ENCODE measurements at regions of chr7 and their contacts with region 1.

Region 1: DNA sequence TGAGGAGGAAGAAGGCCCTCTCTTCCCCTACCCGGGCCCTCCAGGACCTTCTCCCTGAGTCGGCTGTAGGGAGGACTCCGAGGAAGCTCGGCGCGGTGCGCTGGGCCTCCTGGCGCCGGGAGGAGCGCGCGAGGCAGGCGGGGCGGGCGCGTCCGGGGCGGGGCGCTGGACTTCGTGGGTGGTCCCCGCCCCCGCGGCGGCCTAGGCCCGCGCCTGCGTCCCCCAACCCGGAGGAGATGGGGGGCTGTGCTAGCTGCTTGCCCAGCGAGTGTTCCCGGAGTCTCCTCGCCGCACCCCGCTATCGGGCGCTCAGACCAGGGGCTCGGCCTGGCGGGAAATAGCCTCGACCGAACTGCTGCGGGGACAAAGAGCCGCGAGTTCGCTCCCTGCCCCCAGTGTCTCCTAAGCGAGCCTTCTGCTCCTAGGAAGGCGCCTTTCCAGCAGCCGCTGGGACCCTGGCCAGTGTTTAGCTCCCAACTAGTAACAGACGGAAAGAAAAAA is 19.2 kb upstream of the SMO start:
- DNase-seq: peak in 2 of 3 donors; percentile 46 to 65
- H3K4me3 ChIP-seq: peak overlapping the region; percentile 50 to 85 (median 73)
- H3K27ac ChIP-seq: peak overlapping the region in 1 of 2 experiments; percentile 73
- H3K4me1 ChIP-seq: peaks cover 3 to 18% (median 14%) of the 10 kb centered on the region in 4 experiments
- H3K27me3 ChIP-seq: no peaks in the 10 kb centered on the region

Region 2: DNA sequence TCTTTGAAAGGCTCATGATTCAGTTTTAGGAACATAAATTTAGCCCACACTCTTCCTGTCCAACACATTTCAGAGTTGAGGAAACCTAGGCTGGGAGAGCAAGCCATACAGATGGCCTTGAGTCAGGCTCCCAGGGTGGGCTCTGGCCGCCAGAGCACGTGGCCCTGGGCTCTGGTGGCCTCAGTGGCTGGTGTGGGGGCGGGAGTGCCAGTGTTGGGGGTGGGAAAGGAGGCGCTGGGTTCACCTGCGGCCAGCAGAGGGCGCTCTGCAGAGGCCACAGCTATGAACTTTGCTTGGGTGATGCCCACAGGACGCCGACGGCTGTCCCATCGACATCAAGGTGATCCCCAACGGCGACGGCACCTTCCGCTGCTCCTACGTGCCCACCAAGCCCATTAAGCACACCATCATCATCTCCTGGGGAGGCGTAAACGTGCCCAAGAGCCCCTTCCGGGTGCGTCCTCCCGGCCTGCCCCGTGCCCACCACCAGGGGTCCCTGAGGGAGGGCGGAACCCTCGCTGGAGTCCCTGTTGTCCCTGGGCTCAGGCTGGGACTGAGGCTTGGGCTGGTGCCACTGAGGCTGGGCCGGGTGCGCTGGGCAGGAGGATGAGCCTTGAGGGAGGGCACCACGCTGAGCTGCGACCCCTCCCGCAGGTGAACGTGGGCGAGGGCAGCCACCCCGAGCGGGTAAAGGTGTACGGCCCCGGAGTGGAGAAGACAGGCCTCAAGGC is 327.1 kb before region 1 on chr7:
- CTCF ChIA-PET with region 1: no interaction called
- POLR2A ChIA-PET with region 1: no interaction called
- DNase-seq: peak; percentile 56 to 70 (median 66)
- H3K4me3 ChIP-seq: peak overlapping the region in 2 of 7 experiments; percentile 26 to 75
- H3K27ac ChIP-seq: no peak overlapping the region
- H3K4me1 ChIP-seq: peaks cover 0 to 6% (median 2%) of the 10 kb centered on the region in 4 experiments
- H3K27me3 ChIP-seq: no peaks in the 10 kb centered on the region

Region 3: DNA sequence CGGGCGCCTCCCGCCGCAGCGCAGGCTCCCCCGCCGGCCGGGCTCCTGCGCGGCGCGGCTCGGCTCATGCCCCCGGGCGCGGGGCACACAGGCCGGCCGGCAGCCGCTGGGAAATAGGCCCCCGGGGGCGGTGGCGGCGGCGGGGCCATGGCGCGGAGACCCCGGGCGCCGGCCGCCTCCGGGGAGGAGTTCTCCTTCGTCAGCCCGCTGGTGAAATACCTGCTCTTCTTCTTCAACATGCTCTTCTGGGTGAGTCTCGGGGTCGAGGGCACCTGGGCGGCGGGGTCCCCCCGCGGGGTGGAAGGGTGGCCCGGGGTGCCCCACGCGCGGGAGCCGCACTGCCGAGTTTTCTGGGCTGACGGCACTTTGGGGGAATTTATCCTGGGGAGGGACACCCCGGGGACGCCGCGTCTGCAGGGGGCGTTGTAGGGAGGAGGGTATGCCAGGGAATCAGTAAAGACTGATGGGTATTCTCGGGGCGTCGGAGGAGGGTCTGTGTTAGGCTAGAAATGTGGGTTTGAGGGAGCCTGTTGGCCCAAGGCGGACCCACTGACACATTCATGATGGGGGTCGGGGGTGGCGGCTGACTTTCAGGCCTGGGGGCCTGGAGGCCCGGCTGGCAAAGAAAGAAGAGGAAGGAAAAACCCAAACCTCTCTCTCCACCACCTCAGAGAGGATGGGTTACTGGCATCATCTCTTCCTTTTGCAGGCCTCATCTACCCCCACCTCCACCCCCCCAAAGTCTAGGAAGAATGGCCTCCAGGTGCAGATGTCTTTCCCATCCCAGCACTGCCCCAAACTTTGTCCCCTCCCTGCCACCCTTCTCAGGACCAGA is 24.2 kb before region 1 on chr7:
- CTCF ChIA-PET with region 1: interaction called, 23 read pairs
- POLR2A ChIA-PET with region 1: no interaction called
- DNase-seq: peak in 2 of 3 donors; percentile 20 to 26
- H3K4me3 ChIP-seq: peak overlapping the region; percentile 68 to 83 (median 74)
- H3K27ac ChIP-seq: peak overlapping the region in 1 of 2 experiments; percentile 73
- H3K4me1 ChIP-seq: peaks cover 3 to 54% (median 46%) of the 10 kb centered on the region in 4 experiments
- H3K27me3 ChIP-seq: no peaks in the 10 kb centered on the region